CD8-positive, alpha-beta memory T cell (primary cell): ENCODE measurements at regions of chr11 and their contacts with region 1.

Region 1: GRCh38 chr11:8099291-8099899 is 18.4 kb downstream of the TUB start:
- DNase-seq: peak; percentile 40 to 74 (median 53)
- H3K4me3 ChIP-seq: no peak overlapping the region
- H3K4me3 Mint-ChIP-seq: no peak overlapping the region
- H3K27ac ChIP-seq: no peak overlapping the region
- H3K27ac Mint-ChIP-seq: peak overlapping the region in 1 of 8 donors; percentile 6
- H3K4me1 ChIP-seq: no peaks in the 10 kb centered on the region
- H3K4me1 Mint-ChIP-seq: no peaks in the 10 kb centered on the region
- H3K27me3 ChIP-seq: no peaks in the 10 kb centered on the region
- H3K27me3 Mint-ChIP-seq: no peaks in the 10 kb centered on the region

Region 2: DNA sequence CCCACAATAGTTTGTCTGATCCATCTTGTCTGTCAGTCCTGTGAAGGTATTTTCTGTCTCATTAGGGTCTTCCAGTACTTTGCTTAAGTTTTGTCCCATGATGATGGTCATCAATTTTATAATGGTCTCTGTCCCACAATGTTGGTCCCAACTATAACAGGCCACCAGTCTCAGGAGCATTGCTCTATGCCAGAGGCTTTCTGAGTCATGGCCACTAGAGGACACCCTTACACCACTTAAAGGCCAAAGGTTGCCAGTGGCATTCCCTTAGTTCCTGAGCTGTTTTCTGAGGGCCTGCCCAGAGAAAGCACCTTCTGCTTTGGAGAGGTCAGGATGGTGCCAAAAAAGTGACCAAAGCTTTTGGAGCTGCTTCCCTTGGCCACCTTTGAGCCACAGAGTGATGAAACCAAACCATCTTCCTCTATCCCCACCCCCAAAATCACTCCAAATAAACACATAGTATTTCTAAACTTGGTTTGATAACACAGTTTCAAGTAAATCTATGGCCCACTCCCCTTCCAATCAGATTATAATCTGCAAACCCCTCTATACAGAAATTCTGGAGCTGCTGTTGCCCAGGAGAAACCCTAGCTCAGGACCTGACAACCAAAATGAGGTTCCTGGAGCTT is 92.9 kb before region 1 on chr11:
- CTCF ChIA-PET with region 1: interaction called, 105 read pairs
- POLR2A ChIA-PET with region 1: no interaction called
- DNase-seq: peak in 4 of 5 donors; percentile 11 to 64 (median 28)
- H3K4me3 ChIP-seq: no peak overlapping the region
- H3K4me3 Mint-ChIP-seq: no peak overlapping the region
- H3K27ac ChIP-seq: no peak overlapping the region
- H3K27ac Mint-ChIP-seq: peak overlapping the region in 1 of 8 donors; percentile 36
- H3K4me1 ChIP-seq: no peaks in the 10 kb centered on the region
- H3K4me1 Mint-ChIP-seq: no peaks in the 10 kb centered on the region
- H3K27me3 ChIP-seq: peaks cover 4% of the 10 kb centered on the region
- H3K27me3 Mint-ChIP-seq: peaks cover 4 to 20% of the 10 kb centered on the region in 2 donors

Region 3: DNA sequence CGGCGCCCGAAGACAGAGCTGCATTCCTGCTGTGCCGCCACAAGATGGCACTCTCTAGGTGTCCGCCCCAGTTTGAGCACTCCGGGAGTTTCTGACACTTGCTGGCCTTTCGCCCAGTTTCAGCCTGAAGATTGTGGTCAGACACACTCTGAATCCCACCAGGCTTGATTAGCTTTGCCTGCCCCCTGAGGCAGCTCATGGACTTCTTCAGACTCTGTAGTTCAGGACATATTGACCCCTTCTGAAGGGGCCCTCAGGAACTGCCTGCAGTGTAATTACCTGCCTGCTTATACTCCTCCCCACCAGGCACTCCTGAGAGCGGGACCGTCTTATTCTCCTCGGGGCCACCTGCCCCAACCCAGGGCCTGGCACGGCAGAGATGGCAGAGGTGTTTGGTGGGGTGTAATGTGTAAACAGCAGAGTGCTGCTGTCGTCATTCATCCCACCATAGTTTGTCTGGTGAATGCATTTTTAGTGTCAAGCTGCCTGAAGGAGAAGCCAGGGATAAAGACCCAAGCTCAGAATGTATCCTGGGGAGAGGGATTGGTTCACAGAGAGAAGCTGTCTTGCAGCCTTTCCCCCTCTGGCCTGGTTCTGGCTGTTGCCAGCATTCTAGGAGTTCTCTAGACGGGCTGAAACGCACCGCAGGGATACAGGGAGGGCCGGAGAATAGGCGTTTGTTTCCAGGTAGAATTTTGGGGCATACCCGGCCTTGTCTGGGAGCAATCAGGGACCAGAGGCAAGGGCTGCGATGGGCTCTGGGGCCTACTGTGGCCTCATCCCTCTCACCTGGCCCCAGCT is 65.9 kb before region 1 on chr11:
- CTCF ChIA-PET with region 1: interaction called, 31 read pairs
- POLR2A ChIA-PET with region 1: no interaction called
- DNase-seq: peak; percentile 21 to 62 (median 36)
- H3K4me3 ChIP-seq: no peak overlapping the region
- H3K4me3 Mint-ChIP-seq: peak overlapping the region in 5 of 7 donors; percentile 16 to 65 (median 54)
- H3K27ac ChIP-seq: no peak overlapping the region
- H3K27ac Mint-ChIP-seq: peak overlapping the region in 2 of 8 donors; percentile 83
- H3K4me1 ChIP-seq: peaks cover 5% of the 10 kb centered on the region
- H3K4me1 Mint-ChIP-seq: peaks cover 6 to 8% (median 7%) of the 10 kb centered on the region in 3 donors
- H3K27me3 ChIP-seq: peaks cover 6% of the 10 kb centered on the region
- H3K27me3 Mint-ChIP-seq: peaks cover 19 to 40% of the 10 kb centered on the region in 2 donors

Region 4: DNA sequence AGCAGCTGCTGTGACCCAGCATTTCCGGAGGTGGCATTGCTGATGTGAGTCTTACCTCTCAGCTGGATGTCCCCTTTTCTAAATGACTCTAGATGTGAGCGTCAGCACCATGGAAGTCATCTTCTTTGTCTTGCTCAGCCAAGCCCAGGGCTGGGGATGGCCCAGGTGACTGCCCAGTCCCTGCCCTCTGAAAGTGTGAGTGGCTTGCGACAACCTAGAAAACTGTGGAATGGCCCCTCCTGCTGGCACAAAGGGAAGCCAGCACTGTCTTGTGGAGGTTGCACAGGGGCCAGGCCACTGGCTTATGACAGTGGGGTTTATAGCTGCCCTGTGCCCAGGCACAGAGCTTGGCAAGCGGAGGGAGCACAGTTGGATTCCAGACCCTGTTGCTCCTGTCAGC is 12.2 kb before region 1 on chr11:
- CTCF ChIA-PET with region 1: interaction called, 11 read pairs
- POLR2A ChIA-PET with region 1: no interaction called
- DNase-seq: peak in 1 of 5 donors; percentile 42
- H3K4me3 ChIP-seq: no peak overlapping the region
- H3K4me3 Mint-ChIP-seq: no peak overlapping the region
- H3K27ac ChIP-seq: no peak overlapping the region
- H3K27ac Mint-ChIP-seq: no peak overlapping the region
- H3K4me1 ChIP-seq: no peaks in the 10 kb centered on the region
- H3K4me1 Mint-ChIP-seq: peaks cover 0 to 3% (median 0%) of the 10 kb centered on the region in 3 donors
- H3K27me3 ChIP-seq: peaks cover 11% of the 10 kb centered on the region
- H3K27me3 Mint-ChIP-seq: peaks cover 21 to 45% of the 10 kb centered on the region in 2 donors

Region 5: DNA sequence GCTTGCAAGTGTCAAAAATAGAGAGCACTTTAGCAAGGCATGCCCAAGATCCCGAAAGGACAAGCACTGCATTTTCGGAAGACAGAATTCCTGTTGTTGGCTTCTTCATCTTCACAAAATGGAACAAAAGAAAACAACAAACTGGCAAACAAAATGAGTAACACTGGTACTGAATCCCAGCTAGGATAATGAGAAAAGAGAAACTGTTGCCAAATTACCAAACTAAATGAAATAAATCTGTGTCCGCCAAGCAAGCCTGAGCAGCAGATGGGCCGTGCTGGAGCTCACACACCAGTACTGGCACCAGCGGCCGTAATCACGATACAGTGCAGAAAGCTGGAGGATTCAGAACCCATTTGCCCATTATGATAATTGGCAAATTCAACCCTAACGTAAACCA is 12.2 kb after region 1 on chr11:
- CTCF ChIA-PET with region 1: interaction called, 42 read pairs
- POLR2A ChIA-PET with region 1: no interaction called
- DNase-seq: no peak
- H3K4me3 ChIP-seq: no peak overlapping the region
- H3K4me3 Mint-ChIP-seq: no peak overlapping the region
- H3K27ac ChIP-seq: no peak overlapping the region
- H3K27ac Mint-ChIP-seq: peak overlapping the region in 1 of 8 donors; percentile 30
- H3K4me1 ChIP-seq: no peaks in the 10 kb centered on the region
- H3K4me1 Mint-ChIP-seq: no peaks in the 10 kb centered on the region
- H3K27me3 ChIP-seq: no peaks in the 10 kb centered on the region
- H3K27me3 Mint-ChIP-seq: no peaks in the 10 kb centered on the region